Pancreas (tissue), 10 donors: ENCODE measurements at regions of chr12 and their contacts with region 1.

Region 1: DNA sequence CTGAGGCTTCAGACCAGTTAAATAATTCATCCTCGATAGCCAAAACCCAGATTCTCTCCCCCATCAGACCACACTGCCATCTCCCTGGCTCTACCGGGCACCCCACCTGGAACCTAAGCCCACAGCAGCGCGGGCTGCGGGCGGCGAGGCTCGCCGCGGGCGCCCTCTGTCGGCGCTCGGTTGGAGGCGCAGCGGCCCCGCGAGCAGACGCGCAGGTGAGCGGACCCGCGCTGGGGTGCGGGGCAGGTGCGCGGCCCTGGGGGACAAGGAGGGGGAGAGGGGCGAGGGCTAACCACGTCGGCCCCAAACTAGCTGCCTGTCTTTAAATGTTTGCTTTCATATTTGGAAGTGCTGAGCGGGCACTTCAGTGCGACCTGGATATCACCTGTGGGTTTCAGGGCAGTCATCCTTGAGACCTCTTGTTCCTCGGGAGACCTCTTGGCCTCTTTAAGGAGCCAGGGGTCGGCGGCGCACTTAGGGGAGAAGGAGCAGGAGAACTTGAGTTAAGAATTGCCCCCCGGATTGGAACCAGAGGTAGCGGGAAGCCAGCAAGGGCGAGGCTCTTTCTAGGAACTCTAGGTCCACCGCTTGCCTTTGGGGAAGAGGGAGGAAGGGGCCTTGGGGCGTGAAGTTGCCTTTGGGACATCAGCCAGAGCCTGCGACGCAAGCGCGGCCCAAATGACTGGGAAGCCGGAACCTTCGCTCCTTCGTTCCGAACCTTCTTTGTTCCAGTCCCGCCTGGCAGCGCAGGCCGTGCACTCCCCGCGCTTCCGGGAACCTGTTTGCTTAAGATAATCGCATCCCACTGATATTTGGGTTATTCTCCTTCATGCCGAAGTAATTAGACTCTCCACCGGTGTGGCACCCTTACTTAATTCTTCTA is 78.7 kb downstream of the NEDD1 start:
- DNase-seq: peak in 4 of 6 donors; percentile 37 to 82 (median 49)
- ATAC-seq: peak; percentile 90 to 96 (median 93)
- H3K4me3 ChIP-seq: peak overlapping the region; percentile 13 to 61 (median 34)
- H3K27ac ChIP-seq: no peak overlapping the region
- H3K4me1 ChIP-seq: no peaks in the 10 kb centered on the region
- H3K27me3 ChIP-seq: peaks cover 0 to 3% (median 0%) of the 10 kb centered on the region in 4 donors
- CTCF ChIP-seq: peak; percentile 82 to 94 (median 93)

Region 2: GRCh38 chr12:96892104-96892503 is 93.6 kb before region 1 on chr12:
- intact Hi-C with region 1: no loop called
- DNase-seq: no peak
- ATAC-seq: no peak
- H3K4me3 ChIP-seq: no peak overlapping the region
- H3K27ac ChIP-seq: no peak overlapping the region
- H3K4me1 ChIP-seq: no peaks in the 10 kb centered on the region
- H3K27me3 ChIP-seq: no peaks in the 10 kb centered on the region
- CTCF ChIP-seq: no peak

Region 3: GRCh38 chr12:97022536-97023230 is 37.0 kb after region 1 on chr12:
- intact Hi-C with region 1: no loop called
- DNase-seq: no peak
- ATAC-seq: no peak
- H3K4me3 ChIP-seq: no peak overlapping the region
- H3K27ac ChIP-seq: no peak overlapping the region
- H3K4me1 ChIP-seq: no peaks in the 10 kb centered on the region
- H3K27me3 ChIP-seq: no peaks in the 10 kb centered on the region
- CTCF ChIP-seq: no peak

Region 4: DNA sequence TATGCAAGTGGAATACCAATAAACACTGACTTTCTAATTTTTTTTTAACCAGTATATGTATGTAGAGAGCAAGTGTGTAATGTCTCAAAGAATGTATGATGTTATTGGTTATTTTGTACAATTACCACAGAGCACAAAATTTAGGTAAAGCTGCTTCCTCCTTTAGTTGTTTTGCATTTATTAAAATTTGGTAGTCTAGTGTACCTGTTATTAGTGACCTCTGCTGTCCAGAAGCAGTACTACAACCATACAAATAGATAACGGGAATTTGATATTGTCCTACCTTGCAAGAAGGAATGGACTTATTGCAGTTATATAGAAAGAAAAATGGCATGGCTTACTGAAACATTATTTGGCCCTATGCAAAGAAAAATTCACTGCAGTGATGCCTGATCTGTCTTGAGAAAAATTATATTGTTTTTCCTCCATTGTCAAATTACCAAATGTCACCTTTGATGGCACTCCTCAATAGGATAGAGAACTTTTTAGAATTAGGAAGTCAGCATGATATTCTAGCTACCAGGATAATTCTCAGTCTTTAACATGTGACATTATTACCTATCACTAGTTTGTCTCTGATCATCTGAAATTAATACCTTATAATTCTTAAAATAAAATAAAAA is 323.0 kb after region 1 on chr12:
- intact Hi-C with region 1: loop called in 1 of 3 experiments (anchors 5 kb)
- DNase-seq: no peak
- ATAC-seq: peak in 3 of 4 donors; percentile 62 to 70 (median 66)
- H3K4me3 ChIP-seq: no peak overlapping the region
- H3K27ac ChIP-seq: no peak overlapping the region
- H3K4me1 ChIP-seq: no peaks in the 10 kb centered on the region
- H3K27me3 ChIP-seq: no peaks in the 10 kb centered on the region
- CTCF ChIP-seq: peak; percentile 26 to 84 (median 64)

Region 5: DNA sequence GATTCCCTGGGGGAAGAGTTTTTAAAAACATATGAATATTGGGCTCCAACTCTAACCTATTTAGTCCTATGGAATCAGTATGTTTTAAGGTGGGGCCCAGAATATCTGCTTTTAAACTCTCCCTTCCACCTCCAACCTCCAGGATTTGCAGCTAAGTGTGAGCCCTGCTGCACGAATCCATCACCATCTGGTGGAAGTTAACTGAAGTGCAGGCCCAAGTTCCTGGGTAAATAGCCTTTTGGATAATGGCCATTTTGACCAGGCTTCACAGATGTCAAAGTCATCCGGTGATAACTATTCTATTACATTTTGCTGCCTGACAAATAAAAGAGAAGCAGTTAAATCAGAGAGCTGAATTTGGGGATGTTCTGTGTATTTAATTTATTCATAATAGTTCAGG is 418.8 kb after region 1 on chr12:
- intact Hi-C with region 1: loop called in 1 of 3 experiments (anchors 10 kb)
- DNase-seq: peak in 2 of 6 donors; percentile 9 to 43
- ATAC-seq: peak; percentile 69 to 91 (median 74)
- H3K4me3 ChIP-seq: no peak overlapping the region
- H3K27ac ChIP-seq: no peak overlapping the region
- H3K4me1 ChIP-seq: no peaks in the 10 kb centered on the region
- H3K27me3 ChIP-seq: no peaks in the 10 kb centered on the region
- CTCF ChIP-seq: peak; percentile 26 to 77 (median 64)

Region 6: DNA sequence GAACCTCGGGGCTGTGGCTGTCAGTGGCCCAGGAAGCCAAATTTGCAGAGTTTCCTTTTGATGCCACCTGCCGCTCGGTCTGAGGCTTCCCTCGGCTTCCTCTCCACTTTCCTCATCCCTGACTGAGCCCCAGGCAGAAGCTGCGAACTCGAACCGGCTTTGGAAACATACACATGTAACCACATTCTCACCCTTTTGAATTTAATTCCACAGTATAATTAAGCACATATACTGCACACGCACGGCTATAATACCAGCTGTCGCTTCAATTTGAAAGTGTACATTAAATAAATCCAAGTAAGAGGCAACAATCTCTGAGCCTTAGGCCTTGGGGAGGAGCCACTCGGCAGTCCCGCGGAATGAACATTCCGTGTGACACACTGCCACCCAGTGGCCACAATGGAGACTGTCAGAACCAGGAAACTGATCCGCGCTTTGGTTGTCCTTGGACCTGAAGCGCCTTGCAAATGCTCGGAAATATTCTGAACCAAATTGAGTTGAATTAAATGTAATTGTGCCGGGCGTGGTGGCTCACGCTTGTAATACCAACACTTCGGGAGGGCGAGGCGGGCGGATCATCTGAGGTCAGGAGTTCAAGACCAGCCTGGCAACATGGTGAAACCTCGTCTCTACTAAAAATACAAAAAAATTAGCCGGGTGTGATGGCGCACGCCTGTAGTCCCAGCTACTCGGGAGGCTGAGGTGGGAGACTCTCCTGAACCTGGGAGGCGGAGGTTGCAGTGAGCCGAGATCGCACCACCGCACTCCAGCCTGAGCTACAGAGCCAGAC is 1411.8 kb after region 1 on chr12:
- intact Hi-C with region 1: loop called in 1 of 3 experiments (anchors 10 kb)
- DNase-seq: peak; percentile 71 to 91 (median 84)
- ATAC-seq: peak; percentile 98 to 100 (median 100)
- H3K4me3 ChIP-seq: peak overlapping the region in 2 of 4 donors; percentile 15 to 39
- H3K27ac ChIP-seq: no peak overlapping the region
- H3K4me1 ChIP-seq: no peaks in the 10 kb centered on the region
- H3K27me3 ChIP-seq: no peaks in the 10 kb centered on the region
- CTCF ChIP-seq: peak; percentile 88 to 93 (median 91)